IMR-90 (cell line): ENCODE measurements at regions of chr6 and their contacts with region 1.

Region 1: GRCh38 chr6:110981202-110981600 is 637 bp upstream of the RPF2 start:
- DNase-seq: no peak
- ATAC-seq: no peak
- H3K4me3 ChIP-seq: peak overlapping the region; percentile 97
- H3K27ac ChIP-seq: peak overlapping the region; percentile 2
- H3K4me1 ChIP-seq: peaks cover 3% of the 10 kb centered on the region; the same call in 1 of the 2 replicates
- H3K27me3 ChIP-seq: no peaks in the 10 kb centered on the region
- CTCF ChIP-seq: no peak
- POLR2A ChIP-seq: no peak
- RAD21 ChIP-seq: no peak

Region 2: GRCh38 chr6:111011360-111012142 is 30.4 kb after region 1 on chr6:
- CTCF ChIA-PET with region 1: interaction called, 10 read pairs
- POLR2A ChIA-PET with region 1: no interaction called
- dilution Hi-C with region 1: no loop called
- in situ Hi-C with region 1: no loop called
- intact Hi-C with region 1: no loop called
- DNase-seq: peak; percentile 55
- ATAC-seq: peak; percentile 80
- H3K4me3 ChIP-seq: no peak overlapping the region
- H3K27ac ChIP-seq: no peak overlapping the region
- H3K4me1 ChIP-seq: no peaks in the 10 kb centered on the region; the same call in 1 of the 2 replicates
- H3K27me3 ChIP-seq: no peaks in the 10 kb centered on the region
- CTCF ChIP-seq: peak; percentile 70
- POLR2A ChIP-seq: no peak
- RAD21 ChIP-seq: peak; percentile 73

Region 3: GRCh38 chr6:111061508-111061907 is 80.3 kb after region 1 on chr6:
- CTCF ChIA-PET with region 1: no interaction called
- POLR2A ChIA-PET with region 1: no interaction called
- dilution Hi-C with region 1: no loop called
- in situ Hi-C with region 1: no loop called
- intact Hi-C with region 1: no loop called
- DNase-seq: peak; percentile 12
- ATAC-seq: no peak
- H3K4me3 ChIP-seq: no peak overlapping the region
- H3K27ac ChIP-seq: no peak overlapping the region
- H3K4me1 ChIP-seq: no peaks in the 10 kb centered on the region
- H3K27me3 ChIP-seq: peaks cover 19% of the 10 kb centered on the region
- CTCF ChIP-seq: no peak
- POLR2A ChIP-seq: no peak
- RAD21 ChIP-seq: no peak